Right ventricle myocardium inferior (tissue), 1 donor: ENCODE measurements at regions of chr3 and their contacts with region 1.

Region 1: DNA sequence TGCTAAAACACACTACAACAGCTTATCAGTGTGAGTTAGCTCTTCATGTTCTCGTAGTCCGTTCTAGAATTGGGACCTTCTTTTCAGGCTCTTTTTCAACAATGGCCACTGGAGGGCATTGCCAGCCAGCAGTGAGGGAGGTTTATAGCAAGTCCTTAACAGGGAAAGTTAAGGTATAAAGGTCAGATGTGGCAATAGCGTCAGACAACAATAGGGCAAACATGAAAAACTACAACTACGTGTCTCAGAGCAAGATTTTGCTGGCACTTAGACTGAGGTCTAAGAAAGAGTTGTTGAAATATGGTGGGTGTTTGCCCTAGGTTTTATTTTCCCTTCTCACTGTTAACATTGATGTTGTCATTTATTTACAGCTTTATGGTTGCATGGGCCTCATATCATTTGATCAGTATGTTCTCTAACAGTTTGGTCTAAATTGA is 161.4 kb downstream of the GMNC start:
- DNase-seq: no peak
- ATAC-seq: peak; percentile 72

Region 2: GRCh38 chr3:190384241-190384863 is 316.8 kb before region 1 on chr3:
- intact Hi-C with region 1: loop called (anchors 5 kb)
- DNase-seq: no peak
- ATAC-seq: peak; percentile 88

Region 3: DNA sequence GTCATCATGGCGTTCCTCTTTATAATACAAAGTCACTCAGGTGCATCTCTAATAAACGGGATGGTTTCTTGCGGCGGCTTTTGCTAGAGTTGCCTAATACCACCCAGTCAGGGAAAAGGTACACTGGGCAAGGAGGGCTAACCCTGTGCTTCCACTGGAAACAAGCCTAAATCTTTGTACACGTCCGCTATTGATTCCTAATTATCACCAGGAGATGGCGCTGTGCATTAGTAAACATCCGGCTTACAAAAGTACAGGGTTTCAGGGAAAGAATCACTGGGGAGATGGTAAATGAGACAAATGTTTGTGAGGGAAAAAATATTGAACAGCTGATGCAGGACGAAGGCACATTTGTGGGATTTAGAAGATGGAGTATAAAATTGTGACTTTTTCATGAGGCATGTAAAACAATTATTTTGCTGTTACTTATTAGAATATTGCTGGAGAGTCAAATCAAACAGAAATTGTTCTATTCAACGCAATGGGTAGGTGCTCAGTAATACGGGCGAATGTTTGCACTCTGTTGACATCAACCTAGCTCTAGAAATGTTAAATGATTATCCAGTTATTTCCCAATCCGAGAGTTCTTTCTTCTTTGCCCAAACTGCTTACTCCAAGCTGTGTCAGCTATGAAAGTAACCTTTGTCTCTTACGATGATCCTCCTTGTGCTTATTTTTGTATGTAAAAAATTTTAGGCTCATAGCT is 110.8 kb after region 1 on chr3:
- intact Hi-C with region 1: loop called (anchors 1 kb)
- DNase-seq: no peak
- ATAC-seq: no peak

Region 4: DNA sequence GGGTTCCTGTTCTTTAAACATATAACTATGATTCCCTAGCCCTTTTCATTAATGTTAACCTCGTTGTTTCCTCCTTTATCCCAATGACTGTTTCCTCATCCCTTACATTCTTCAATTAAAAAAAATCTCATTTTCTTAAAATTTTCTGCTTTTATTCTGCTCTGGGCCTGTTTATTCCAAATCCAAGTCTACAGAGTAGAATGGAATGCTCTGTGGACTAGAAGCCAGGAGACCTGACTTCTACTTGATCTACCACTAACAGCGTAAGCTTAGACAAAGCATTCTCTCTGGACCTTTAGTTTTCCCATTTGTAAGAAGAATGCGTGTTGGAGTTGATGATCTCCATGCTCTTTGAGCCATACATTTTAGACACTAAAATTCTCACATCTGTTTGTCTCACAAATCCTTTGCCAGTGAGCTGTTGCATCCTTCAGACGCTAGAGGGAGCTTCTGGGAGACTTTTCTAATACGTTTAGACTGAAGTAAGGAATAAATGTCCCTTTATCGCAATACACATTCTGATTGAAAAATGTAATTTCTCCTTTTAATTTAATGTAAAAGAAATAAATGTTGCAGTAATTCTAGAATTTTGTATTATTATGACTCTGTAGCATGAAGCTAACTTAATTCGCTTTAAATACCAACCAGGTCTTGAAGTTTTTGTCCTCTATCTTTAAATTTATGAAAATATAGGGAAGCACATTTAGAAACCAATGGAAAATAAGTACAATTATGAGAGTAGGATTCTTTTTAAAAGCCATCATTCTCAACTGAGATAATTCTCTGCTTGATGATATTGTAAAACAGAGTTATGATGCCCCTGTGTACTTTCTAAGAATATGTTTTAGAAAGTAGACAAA is 183.1 kb after region 1 on chr3:
- intact Hi-C with region 1: loop called (anchors 5 kb)
- DNase-seq: no peak
- ATAC-seq: no peak